Activated B cell treated with CpG ODN at 0.5 μM for 24 hours (primary cell): ENCODE measurements at regions of chr2 and their contacts with region 1.

Region 1: DNA sequence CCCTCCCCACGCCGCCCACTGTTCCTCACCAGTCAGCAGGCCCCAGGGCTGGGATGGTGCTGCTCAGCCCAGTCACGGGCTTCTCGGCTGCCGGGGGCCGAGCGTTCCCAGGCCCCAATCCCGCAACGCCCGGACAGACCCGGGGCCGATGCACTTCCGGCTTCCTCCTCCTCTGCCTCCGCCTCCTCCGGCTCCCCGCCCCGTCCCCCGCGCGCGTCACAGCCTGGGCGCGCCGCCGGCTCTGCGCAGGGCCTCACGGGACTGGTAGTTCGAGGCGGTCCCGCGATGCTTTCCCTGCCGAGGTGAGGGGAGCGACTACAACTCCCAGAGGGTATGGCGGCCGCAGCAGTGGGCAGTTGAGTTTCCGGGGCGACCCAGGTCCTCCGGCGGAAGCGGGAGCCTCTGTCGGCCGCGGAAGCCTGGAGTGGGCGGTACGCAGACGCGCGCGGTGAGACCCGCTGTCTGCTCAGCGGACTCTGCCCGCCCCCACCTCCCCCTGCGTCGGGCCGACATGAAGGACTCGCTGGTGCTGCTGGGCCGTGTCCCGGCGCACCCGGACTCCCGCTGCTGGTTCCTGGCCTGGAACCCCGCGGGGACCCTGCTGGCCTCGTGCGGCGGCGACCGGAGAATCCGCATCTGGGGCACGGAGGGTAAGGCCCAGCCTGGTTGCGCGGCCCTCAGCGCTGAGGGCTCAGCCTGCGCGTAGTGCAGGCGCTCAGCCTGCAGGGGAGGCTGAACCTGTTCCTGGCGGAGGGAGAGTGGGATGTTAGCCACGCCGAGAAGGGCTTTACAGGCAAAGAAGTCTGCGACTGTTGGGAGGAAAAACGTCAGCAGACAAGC is at the starts of genes CIAO1 and TMEM127:
- DNase-seq: peak; percentile 97
- ATAC-seq: peak; percentile 93
- H3K4me3 Mint-ChIP-seq: peak within 1 kb of the TSS; percentile 97
- H3K27ac Mint-ChIP-seq: peak within 1 kb of the TSS; percentile 83
- H3K4me1 Mint-ChIP-seq: peaks cover 45% of the 10 kb centered on the region
- H3K27me3 Mint-ChIP-seq: no peaks in the 10 kb centered on the region
- CTCF ChIP-seq: no peak
- total RNA-seq, gene CIAO1: 65.6 and 71.6 TPM in 2 replicates
- total RNA-seq, gene TMEM127: 36.6 and 43.2 TPM in 2 replicates

Region 2: DNA sequence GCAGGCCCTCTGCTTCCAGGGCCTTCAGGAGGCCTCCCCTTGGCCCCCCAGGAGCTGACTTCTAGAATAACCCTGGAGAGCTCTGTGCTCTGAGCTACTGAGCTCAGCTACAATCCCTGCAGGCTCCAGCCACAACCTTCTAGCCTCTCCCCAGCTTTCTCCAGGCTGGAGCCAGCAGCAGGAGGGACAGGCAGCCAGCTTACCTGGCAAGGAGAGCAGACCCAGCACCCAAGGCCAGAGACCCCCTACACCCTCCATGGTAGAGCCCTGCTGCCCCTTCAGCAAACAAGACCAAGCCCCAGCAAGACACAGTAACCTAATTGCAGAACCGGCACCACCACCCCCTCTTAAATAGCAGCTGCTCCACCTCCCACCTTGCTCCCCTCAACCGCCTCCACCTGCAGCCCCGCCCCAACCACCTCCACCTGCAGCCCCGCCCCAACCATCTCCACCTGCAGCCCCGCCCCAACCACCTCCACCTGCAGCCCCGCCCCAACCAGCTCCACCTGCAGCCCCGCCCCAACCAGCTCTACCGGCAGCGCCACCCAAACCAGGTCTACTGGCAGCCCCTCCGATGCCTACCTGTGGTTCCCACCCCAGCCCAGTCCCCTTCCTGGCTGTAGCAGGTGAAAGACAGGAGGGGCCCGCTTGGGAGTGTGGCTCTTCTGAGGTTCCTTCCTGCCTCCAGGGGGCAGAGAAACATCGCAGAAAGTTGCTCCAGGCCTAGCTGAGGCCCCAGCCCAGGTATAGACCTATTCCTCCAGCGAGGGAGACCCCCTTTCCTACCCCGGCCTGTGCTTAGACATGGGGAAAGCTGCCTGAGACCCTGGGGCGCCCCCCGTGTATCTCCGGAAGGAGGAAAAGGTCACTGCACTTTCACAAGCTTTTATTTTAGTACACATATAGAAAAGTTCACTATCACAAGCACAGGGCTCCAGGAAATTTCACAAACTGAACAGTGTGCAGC is 127.6 kb before region 1 on chr2 and contains the start of gene ASTL:
- CTCF ChIA-PET with region 1: interaction called, 16 read pairs
- POLR2A ChIA-PET with region 1: interaction called, 4 read pairs
- intact Hi-C with region 1: loop called (anchors 1 kb)
- DNase-seq: peak; percentile 53
- ATAC-seq: peak; percentile 73
- H3K4me3 Mint-ChIP-seq: peak within 1 kb of the TSS; percentile 38
- H3K27ac Mint-ChIP-seq: peak within 1 kb of the TSS; percentile 35
- H3K4me1 Mint-ChIP-seq: peaks cover 37% of the 10 kb centered on the region
- H3K27me3 Mint-ChIP-seq: no peaks in the 10 kb centered on the region
- CTCF ChIP-seq: no peak
- total RNA-seq, gene ASTL: 1.0 and 1.6 TPM in 2 replicates

Region 3: DNA sequence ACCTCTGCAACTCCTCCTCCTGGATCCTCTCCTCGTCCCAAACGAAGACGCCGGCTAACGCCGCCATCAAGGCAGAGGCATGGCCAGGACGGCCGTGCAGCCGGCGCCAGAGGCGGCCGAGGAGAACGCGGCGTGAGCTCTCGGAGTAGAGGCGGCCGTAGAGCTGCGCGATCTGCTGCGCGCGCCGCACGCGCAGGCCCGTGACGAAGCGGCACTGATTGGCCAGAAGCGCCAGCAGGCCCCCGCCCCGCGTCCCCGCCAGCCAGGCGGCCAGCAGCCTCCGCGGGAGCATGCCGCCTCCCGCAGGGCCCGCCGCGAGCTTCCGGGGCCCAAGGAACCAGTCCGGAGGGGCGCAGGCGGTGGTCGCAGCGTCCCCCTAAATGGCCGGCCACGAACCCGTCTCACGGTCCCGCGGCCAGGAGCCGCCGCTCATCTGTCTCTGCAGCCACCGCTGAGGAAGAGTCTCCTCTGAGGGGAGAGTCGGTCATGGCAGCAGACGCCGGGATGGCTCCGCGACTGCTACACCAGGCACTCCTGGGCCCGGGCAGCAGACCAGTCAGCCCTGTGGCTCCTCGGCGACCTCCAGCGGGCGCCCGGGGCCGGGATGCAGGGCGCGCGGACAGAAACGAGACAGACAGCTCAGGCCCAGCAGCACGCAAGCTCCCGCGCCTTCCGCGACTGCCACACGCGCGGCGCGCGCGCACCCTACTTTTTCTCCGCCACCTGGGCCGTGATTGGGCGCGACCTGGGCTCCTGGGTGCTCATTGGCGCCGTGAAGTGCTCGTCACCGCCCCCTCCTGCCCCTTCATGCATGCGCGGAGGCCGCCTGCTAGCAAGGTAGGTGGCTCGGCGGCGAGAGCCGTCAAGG is 57.7 kb before region 1 on chr2 and contains the start of gene STARD7:
- CTCF ChIA-PET with region 1: interaction called, 6 read pairs
- POLR2A ChIA-PET with region 1: interaction called, 40 read pairs
- intact Hi-C with region 1: loop called (anchors 1 kb)
- DNase-seq: peak; percentile 96
- ATAC-seq: peak; percentile 89
- H3K4me3 Mint-ChIP-seq: peak within 1 kb of the TSS; percentile 92
- H3K27ac Mint-ChIP-seq: peak within 1 kb of the TSS; percentile 91
- H3K4me1 Mint-ChIP-seq: peaks cover 74% of the 10 kb centered on the region
- H3K27me3 Mint-ChIP-seq: no peaks in the 10 kb centered on the region
- CTCF ChIP-seq: no peak
- total RNA-seq, gene STARD7: 148 and 158 TPM in 2 replicates

Region 4: DNA sequence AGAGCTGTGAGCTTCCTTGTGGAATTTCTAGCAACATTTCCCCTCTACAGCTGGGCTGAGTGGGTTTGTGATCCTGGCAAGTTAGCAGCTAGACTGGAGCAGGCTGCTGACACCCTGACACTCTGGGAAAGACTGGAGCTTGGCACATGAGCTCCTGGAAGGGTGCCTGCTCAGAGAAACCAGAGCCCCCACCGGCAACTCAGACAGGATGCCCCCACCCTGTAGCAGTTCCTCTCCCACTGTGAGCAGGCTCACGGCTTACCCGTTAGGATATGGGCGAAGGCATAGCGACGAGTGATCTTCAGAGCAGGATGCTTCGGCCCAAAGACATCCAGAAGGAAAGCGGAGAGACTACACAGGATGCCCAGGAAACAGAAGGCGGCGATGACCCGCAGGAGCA is 11.5 kb before region 1 on chr2:
- CTCF ChIA-PET with region 1: interaction called, 4 read pairs
- POLR2A ChIA-PET with region 1: interaction called, 11 read pairs
- intact Hi-C with region 1: loop called (anchors 1 kb)
- DNase-seq: no peak
- ATAC-seq: no peak
- H3K4me3 Mint-ChIP-seq: no peak overlapping the region
- H3K27ac Mint-ChIP-seq: no peak overlapping the region
- H3K4me1 Mint-ChIP-seq: peaks cover 50% of the 10 kb centered on the region
- H3K27me3 Mint-ChIP-seq: no peaks in the 10 kb centered on the region
- CTCF ChIP-seq: no peak

Region 5: DNA sequence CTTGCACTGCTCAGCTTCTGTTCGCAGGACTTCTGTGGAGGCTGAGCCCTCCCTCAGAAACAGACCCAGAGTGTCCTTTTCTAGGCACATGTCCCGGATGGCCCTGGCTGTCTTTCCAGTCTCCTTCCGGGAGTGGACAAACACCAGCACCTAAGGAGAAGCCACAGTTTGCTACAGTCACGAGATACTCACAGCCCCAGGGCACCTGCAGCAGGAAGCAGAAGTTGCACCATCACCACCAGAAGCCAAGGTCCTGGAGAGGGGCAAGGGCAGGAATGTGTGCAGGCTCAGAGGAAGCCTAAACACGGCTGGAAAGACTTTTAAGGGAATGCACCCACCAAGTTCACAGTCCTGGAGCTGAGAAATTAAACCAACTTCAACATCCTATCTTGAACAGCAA is 25.7 kb after region 1 on chr2:
- CTCF ChIA-PET with region 1: no interaction called
- POLR2A ChIA-PET with region 1: no interaction called
- intact Hi-C with region 1: no loop called
- DNase-seq: no peak
- ATAC-seq: no peak
- H3K4me3 Mint-ChIP-seq: no peak overlapping the region
- H3K27ac Mint-ChIP-seq: no peak overlapping the region
- H3K4me1 Mint-ChIP-seq: no peaks in the 10 kb centered on the region
- H3K27me3 Mint-ChIP-seq: no peaks in the 10 kb centered on the region
- CTCF ChIP-seq: no peak

Region 6: GRCh38 chr2:96336104-96336775 is 70.2 kb after region 1 on chr2:
- CTCF ChIA-PET with region 1: no interaction called
- POLR2A ChIA-PET with region 1: interaction called, 13 read pairs
- intact Hi-C with region 1: loop called (anchors 1 kb)
- DNase-seq: no peak
- ATAC-seq: no peak
- H3K4me3 Mint-ChIP-seq: peak overlapping the region; percentile 87
- H3K27ac Mint-ChIP-seq: peak overlapping the region; percentile 91
- H3K4me1 Mint-ChIP-seq: peaks cover 36% of the 10 kb centered on the region
- H3K27me3 Mint-ChIP-seq: no peaks in the 10 kb centered on the region
- CTCF ChIP-seq: no peak

Region 7: GRCh38 chr2:96638144-96639121 is 372.4 kb after region 1 on chr2 and contains the start of gene KANSL3:
- CTCF ChIA-PET with region 1: no interaction called
- POLR2A ChIA-PET with region 1: no interaction called
- intact Hi-C with region 1: loop called (anchors 1 kb)
- DNase-seq: peak; percentile 94
- ATAC-seq: peak; percentile 90
- H3K4me3 Mint-ChIP-seq: peak within 1 kb of the TSS; percentile 93
- H3K27ac Mint-ChIP-seq: peak within 1 kb of the TSS; percentile 87
- H3K4me1 Mint-ChIP-seq: peaks cover 36% of the 10 kb centered on the region
- H3K27me3 Mint-ChIP-seq: no peaks in the 10 kb centered on the region
- CTCF ChIP-seq: no peak
- total RNA-seq, gene KANSL3: 24.6 and 31.4 TPM in 2 replicates